Caco-2 (cell line): ENCODE measurements at regions of chr9 and their contacts with region 1.

Region 1: DNA sequence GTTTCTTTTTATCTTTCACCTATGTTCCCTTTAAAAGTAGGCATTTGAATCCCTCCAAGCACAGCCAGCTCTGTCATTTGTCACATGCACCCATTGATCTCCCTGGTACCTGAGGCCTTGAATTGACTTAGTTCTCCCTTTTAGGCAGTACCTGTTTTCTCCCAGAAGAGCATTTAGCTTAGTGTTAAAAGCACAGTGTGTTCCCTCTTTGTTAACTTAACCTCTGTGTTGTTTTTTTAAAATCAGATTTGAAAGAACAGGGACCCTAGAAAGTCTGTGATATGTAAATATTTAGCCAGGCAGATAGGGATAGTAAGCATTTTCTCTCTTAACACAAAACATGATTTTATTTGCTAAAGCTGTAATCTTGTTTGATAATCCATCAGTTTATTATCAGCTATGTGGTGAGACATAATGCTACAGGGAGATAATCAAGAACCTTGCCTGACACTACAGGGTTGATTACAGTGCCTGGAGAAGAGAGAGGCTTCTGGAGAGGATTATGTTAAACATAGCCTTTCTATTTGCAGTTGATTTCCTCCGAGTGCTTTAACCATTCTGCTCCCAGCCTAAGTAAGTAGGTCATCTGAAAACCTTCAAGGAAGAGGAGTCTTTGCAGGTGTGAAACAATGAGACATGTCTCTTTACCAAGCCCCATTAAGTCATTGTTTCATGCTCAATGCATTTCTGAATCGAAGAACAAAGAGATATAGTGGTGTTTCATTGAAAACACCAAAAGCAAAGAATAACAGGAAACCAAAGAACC is 113.6 kb upstream of the SPATA31D4 start:
- DNase-seq: peak; percentile 41 to 48
- H3K4me3 ChIP-seq: no peak overlapping the region
- H3K4me3 Mint-ChIP-seq: peak overlapping the region; percentile 5
- H3K27ac Mint-ChIP-seq: peak overlapping the region; percentile 36
- H3K4me1 ChIP-seq: peaks cover 35% of the 10 kb centered on the region
- H3K4me1 Mint-ChIP-seq: peaks cover 36% of the 10 kb centered on the region
- H3K27me3 ChIP-seq: no peaks in the 10 kb centered on the region
- H3K27me3 Mint-ChIP-seq: no peaks in the 10 kb centered on the region
- CTCF ChIP-seq: no peak

Region 2: GRCh38 chr9:81787747-81788632 is 26.6 kb before region 1 on chr9:
- CTCF ChIA-PET with region 1: no interaction called
- POLR2A ChIA-PET with region 1: no interaction called
- intact Hi-C with region 1: loop called (anchors 1 kb)
- DNase-seq: peak; percentile 60 to 77
- H3K4me3 ChIP-seq: no peak overlapping the region
- H3K4me3 Mint-ChIP-seq: peak overlapping the region; percentile 43
- H3K27ac Mint-ChIP-seq: peak overlapping the region; percentile 69
- H3K4me1 ChIP-seq: peaks cover 24% of the 10 kb centered on the region
- H3K4me1 Mint-ChIP-seq: peaks cover 5% of the 10 kb centered on the region
- H3K27me3 ChIP-seq: no peaks in the 10 kb centered on the region
- H3K27me3 Mint-ChIP-seq: no peaks in the 10 kb centered on the region
- CTCF ChIP-seq: no peak

Region 3: GRCh38 chr9:81848472-81848871 is 33.9 kb after region 1 on chr9:
- CTCF ChIA-PET with region 1: no interaction called
- POLR2A ChIA-PET with region 1: no interaction called
- intact Hi-C with region 1: loop called (anchors 2 kb)
- DNase-seq: no peak
- H3K4me3 ChIP-seq: no peak overlapping the region
- H3K4me3 Mint-ChIP-seq: no peak overlapping the region
- H3K27ac Mint-ChIP-seq: no peak overlapping the region
- H3K4me1 ChIP-seq: no peaks in the 10 kb centered on the region
- H3K4me1 Mint-ChIP-seq: no peaks in the 10 kb centered on the region
- H3K27me3 ChIP-seq: no peaks in the 10 kb centered on the region
- H3K27me3 Mint-ChIP-seq: no peaks in the 10 kb centered on the region
- CTCF ChIP-seq: no peak